ENCODE measurements at regions of chr16 and their contacts with region 1.

Region 1: GRCh38 chr16:57773655-57774295 is 28.5 kb downstream of the KIFC3 start:
- DNase-seq: no peak
- H3K4me3 ChIP-seq: no peak overlapping the region
- H3K27ac ChIP-seq: no peak overlapping the region
- H3K4me1 ChIP-seq: no peaks in the 10 kb centered on the region
- H3K27me3 ChIP-seq: no peaks in the 10 kb centered on the region
- CTCF ChIP-seq: no peak

Region 2: DNA sequence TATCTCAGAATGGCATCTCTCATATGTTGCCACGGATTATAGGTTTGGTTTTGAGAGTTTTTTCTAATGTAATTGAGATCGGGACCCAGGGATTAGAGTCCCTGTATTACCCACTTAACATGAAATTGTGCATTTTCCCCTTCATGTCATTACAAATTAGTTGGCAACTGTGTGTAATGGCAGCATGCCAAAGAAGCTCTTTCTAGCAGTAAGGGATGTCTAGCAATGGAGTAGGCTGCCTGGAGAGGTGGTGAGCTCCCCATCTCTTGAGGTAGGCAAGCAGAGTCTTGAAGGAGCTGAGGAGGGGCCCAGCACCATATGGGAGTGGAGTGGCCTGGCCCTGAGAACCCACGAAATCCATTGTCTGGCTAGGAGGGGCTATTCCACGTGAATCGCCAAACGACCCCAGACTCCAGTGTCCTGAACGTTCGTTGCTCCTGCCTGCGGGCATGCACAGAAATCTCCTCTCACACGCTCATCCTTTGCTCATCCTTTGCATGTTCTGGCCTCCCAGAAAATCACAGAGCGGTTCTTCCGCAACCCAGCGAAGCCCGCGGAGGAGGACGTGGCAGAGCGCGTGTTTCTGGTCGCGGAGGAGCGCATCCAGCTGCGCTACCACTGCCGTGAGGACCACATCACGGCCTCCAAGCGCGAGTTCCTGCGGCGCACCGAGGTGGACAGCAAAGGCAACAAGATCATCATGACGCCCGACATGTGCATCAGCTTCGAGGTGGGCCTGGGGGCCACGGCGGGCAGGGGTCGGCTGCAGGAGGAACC is 48.0 kb before region 1 on chr16:
- CTCF ChIA-PET with region 1: no interaction called
- dilution Hi-C with region 1: loop called (anchors 5 kb)
- in situ Hi-C with region 1: no loop called
- intact Hi-C with region 1: no loop called
- DNase-seq: no peak
- H3K4me3 ChIP-seq: no peak overlapping the region
- H3K27ac ChIP-seq: no peak overlapping the region
- H3K4me1 ChIP-seq: no peaks in the 10 kb centered on the region
- H3K27me3 ChIP-seq: no peaks in the 10 kb centered on the region
- CTCF ChIP-seq: no peak

Measured in mammary epithelial cell (primary cell).